ENCODE measurements at regions of chr9 and their contacts with region 1.

Region 1: GRCh38 chr9:36415822-36416515 is 15.9 kb upstream of the RNF38 start:
- DNase-seq: no peak
- H3K4me3 ChIP-seq: no peak overlapping the region
- H3K27ac ChIP-seq: no peak overlapping the region
- H3K27me3 ChIP-seq: no peaks in the 10 kb centered on the region
- CTCF ChIP-seq: no peak

Region 2: DNA sequence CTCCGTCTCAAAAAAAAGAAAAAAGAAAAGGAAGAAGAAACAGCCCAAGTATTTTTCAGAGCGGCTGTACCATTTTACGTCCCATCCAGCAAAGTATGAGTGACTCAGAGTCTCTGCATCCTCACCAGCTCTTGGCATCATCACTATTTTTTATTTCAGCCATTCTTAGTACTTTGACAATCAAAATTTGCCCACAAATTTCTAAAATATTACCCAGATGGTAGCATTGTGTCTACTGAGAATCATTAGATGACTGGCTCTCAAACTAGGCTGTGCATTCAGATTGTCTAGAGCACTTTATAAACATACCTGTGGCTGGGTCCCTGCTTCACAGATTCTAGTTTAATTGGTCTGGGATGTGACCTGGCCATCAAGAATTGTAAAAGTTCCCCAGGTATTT is 135.2 kb after region 1 on chr9:
- CTCF ChIA-PET with region 1: interaction called, 10 read pairs
- POLR2A ChIA-PET with region 1: no interaction called
- DNase-seq: no peak
- H3K4me3 ChIP-seq: no peak overlapping the region
- H3K27ac ChIP-seq: no peak overlapping the region
- H3K27me3 ChIP-seq: peaks cover 7% of the 10 kb centered on the region
- CTCF ChIP-seq: no peak